OCI-LY7 (cell line): ENCODE measurements at regions of chr1 and their contacts with region 1.

Region 1: GRCh38 chr1:46247436-46248121 is at the start of gene RAD54L:
- DNase-seq: peak; percentile 100
- H3K4me3 ChIP-seq: peak within 1 kb of the TSS; percentile 86
- H3K27ac ChIP-seq: peak within 1 kb of the TSS; percentile 71
- H3K4me1 ChIP-seq: peaks cover 32% of the 10 kb centered on the region
- CTCF ChIP-seq: no peak
- total RNA-seq, gene RAD54L: 53.3 and 62.6 TPM in 2 replicates

Region 2: DNA sequence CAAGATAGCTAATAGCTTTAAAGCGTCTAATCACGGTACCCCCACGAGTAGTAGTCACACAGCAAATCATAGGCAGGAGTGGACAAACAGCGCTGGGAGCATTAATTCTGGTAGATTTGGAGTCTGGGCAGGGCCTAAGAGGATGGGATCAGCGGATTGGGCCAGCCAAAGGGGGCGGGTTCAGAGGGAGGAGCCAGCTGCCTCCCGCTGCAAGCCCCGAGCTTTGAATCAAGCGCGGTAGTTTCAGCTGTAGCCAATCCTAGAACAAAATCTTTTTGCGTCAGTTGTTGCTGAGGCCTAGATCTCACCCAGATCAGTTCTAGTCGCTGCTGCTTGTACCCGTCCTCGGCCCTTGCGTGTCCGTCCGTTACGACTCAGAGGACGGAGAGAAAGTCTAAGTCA is 664.3 kb before region 1 on chr1:
- CTCF ChIA-PET with region 1: no interaction called
- POLR2A ChIA-PET with region 1: no interaction called
- intact Hi-C with region 1: no loop called
- DNase-seq: peak; percentile 98
- H3K4me3 ChIP-seq: peak overlapping the region; percentile 99
- H3K27ac ChIP-seq: peak overlapping the region; percentile 83
- H3K4me1 ChIP-seq: peaks cover 54% of the 10 kb centered on the region
- CTCF ChIP-seq: no peak

Region 3: GRCh38 chr1:46197964-46198811 is 49.4 kb before region 1 on chr1 and contains the start of gene POMGNT1:
- CTCF ChIA-PET with region 1: no interaction called
- POLR2A ChIA-PET with region 1: interaction called, 18 read pairs
- intact Hi-C with region 1: no loop called
- DNase-seq: peak; percentile 76
- H3K4me3 ChIP-seq: peak within 1 kb of the TSS; percentile 70
- H3K27ac ChIP-seq: peak within 1 kb of the TSS; percentile 57
- H3K4me1 ChIP-seq: peaks cover 25% of the 10 kb centered on the region
- CTCF ChIP-seq: peak; percentile 69
- total RNA-seq, gene POMGNT1: 26.8 and 37.3 TPM in 2 replicates

Region 4: GRCh38 chr1:46303038-46303871 is 55.7 kb after region 1 on chr1 and contains the starts of genes LRRC41 and UQCRH:
- CTCF ChIA-PET with region 1: no interaction called
- POLR2A ChIA-PET with region 1: interaction called, 4 read pairs
- intact Hi-C with region 1: loop called (anchors 1 kb)
- DNase-seq: peak; percentile 97
- H3K4me3 ChIP-seq: peak within 1 kb of the TSS; percentile 95
- H3K27ac ChIP-seq: peak within 1 kb of the TSS; percentile 76
- H3K4me1 ChIP-seq: peaks cover 40% of the 10 kb centered on the region
- CTCF ChIP-seq: 0 out of 2 replicates have a peak, but pooled peaks have one; percentile 22
- total RNA-seq, gene LRRC41: 24.1 and 36.8 TPM in 2 replicates
- total RNA-seq, gene UQCRH: 693 and 1,106 TPM in 2 replicates

Region 5: GRCh38 chr1:46333300-46334029 is 85.9 kb after region 1 on chr1:
- CTCF ChIA-PET with region 1: no interaction called
- POLR2A ChIA-PET with region 1: interaction called, 3 read pairs
- intact Hi-C with region 1: loop called (anchors 5 kb)
- DNase-seq: peak; percentile 88
- H3K4me3 ChIP-seq: peak overlapping the region; percentile 51
- H3K27ac ChIP-seq: peak overlapping the region; percentile 79
- H3K4me1 ChIP-seq: peaks cover 39% of the 10 kb centered on the region
- CTCF ChIP-seq: peak; percentile 85

Region 6: DNA sequence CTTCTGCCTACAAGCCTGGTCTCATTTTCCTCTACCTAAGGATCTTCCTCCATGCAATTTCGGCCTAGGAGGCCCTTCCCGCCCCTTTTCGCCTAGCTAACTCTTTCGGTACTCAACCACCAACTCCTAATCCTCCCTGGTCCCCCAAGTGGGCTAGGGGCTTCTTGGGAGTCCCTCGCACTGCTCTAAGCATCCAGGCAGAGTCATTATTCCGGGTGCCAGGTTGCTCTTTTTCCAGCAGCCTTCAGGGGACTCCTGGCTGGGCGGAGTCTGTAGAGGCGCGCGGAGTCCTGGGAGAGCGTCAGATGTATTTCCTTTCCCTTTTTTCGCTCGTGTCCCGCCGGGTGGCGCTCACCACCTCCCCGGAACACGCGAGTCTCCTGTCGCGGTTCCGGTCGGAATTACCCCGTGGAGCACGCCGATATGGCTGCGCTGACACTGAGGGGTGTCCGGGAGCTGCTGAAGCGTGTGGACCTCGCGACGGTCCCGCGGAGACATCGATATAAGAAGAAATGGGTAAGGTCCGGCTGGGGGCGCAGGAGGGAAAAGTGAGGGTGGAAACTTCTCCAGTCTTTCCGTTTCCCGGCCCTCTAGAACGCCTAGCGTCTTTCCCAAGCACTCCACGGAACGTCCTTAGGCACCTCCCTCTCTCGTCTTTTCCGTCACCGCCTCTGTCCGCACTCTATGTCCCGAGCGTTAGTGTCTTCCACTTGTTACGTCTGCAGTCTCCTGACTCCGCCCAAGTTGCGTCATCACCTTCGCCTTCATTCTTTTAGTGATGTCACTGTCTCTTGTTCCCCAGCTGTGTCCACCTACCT is 93.0 kb after region 1 on chr1 and contains the start of gene NSUN4:
- CTCF ChIA-PET with region 1: no interaction called
- POLR2A ChIA-PET with region 1: no interaction called
- intact Hi-C with region 1: loop called (anchors 2 kb)
- DNase-seq: peak; percentile 92
- H3K4me3 ChIP-seq: peak within 1 kb of the TSS; percentile 80
- H3K27ac ChIP-seq: peak within 1 kb of the TSS; percentile 61
- H3K4me1 ChIP-seq: peaks cover 22% of the 10 kb centered on the region
- CTCF ChIP-seq: peak; percentile 85
- total RNA-seq, gene NSUN4: 13.2 and 26.6 TPM in 2 replicates